Spleen (tissue), 13 donors: ENCODE measurements at regions of chr1 and their contacts with region 1.

Region 1: DNA sequence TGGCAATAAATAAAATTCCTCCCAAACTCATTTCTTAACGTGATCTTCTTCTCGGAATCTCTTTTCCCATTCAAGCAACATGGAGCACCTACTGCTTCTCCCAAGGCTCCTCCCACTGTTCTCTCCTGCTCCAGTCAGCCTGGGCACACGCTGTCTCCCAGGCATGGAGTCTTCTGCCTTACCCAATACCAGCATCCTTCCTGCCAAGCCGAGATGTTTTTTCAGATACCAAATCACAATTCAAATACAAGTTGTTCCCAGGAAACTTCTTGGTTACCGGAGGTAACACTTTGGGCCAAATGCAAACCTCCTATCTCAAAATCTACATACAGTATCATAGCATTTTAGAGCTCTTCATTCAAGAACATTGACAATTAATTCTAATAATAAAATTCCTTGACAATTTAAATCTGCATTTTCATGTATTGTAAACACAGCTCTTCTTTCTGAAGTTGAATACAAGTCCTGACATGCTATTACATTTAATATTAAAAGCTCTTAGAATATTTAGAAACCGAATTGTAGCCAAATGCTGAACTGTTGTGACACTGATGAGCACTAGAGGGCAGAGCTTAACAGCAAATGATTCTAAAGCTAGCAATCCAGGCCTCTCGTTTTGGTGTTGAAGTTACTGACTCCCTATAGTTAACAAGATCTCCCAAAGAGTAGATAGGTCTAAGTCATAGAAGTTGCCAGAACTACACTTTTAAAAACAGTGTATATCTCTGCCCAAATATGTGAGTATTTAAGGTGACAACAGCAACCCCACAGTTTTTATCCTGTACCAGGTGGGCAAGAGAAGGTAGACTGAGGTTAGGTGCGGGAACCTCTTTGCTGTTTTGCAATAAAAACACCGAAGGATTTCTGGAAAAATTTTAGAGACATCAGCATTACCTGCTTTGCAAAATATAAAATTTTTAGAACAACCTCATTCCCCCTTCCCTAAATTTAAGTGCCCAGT is 52.3 kb downstream of the BCAR3 start:
- DNase-seq: no peak
- H3K4me3 ChIP-seq: no peak overlapping the region
- H3K27ac ChIP-seq: no peak overlapping the region
- H3K4me1 ChIP-seq: peaks cover 0 to 22% (median 7%) of the 10 kb centered on the region in 6 donors
- H3K27me3 ChIP-seq: no peaks in the 10 kb centered on the region
- CTCF ChIP-seq: peak; percentile 67 to 89 (median 82)
- POLR2A ChIP-seq: no peak

Region 2: GRCh38 chr1:93437976-93438605 is 191.3 kb before region 1 on chr1:
- intact Hi-C with region 1: loop called (anchors 10 kb)
- DNase-seq: no peak
- H3K4me3 ChIP-seq: no peak overlapping the region
- H3K27ac ChIP-seq: no peak overlapping the region
- H3K4me1 ChIP-seq: peaks cover 0 to 5% (median 0%) of the 10 kb centered on the region in 6 donors
- H3K27me3 ChIP-seq: peaks cover 0 to 24% (median 0%) of the 10 kb centered on the region in 7 donors
- CTCF ChIP-seq: peak in 10 of 11 experiments; percentile 7 to 70 (median 52)
- POLR2A ChIP-seq: no peak

Region 3: GRCh38 chr1:93811326-93812065 is 182.1 kb after region 1 on chr1:
- intact Hi-C with region 1: loop called (anchors 2 kb)
- DNase-seq: no peak
- H3K4me3 ChIP-seq: no peak overlapping the region
- H3K27ac ChIP-seq: peak overlapping the region in 5 of 8 donors; percentile 8 to 45 (median 36)
- H3K4me1 ChIP-seq: peaks cover 0 to 30% (median 16%) of the 10 kb centered on the region in 6 donors
- H3K27me3 ChIP-seq: no peaks in the 10 kb centered on the region
- CTCF ChIP-seq: no peak
- POLR2A ChIP-seq: no peak

Region 4: DNA sequence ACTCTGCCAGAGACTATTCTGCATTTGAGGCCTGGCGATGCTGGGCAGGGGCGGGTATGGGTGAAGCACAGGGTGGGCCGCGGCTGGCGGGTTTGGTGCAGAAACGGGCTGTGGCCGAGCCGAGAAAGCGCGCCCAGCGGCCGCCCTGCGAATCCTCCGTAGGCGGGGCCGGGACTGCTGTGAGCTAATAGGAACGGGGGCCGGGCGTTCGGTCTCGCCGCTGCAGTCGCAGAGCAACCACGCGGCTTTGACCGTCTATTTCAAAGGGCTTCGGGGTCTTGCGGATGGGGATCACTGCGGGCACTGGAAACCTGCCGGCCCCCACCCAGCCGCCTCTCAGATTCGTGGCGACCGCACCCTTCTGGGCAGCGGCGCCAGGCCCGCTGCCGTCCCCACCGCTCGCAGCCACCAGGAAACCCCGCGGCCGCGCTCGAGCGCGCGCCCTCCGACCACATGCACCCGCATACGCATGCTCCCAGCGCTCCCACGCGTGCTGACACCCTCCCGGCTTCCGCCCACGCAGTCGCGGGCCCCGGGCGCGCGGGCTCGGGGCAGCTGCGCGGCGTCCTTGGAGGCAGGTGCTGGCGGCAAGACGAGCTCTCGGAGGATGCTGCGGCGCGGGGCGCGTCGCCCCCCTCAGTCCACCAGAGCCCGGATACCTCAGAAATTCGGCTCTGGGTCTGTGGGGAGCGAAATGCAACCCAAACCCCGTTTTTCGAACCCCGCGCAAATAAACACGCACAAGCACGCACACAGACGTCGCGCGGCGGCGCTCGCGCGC is 217.0 kb after region 1 on chr1:
- intact Hi-C with region 1: loop called (anchors 10 kb)
- DNase-seq: peak; percentile 98
- H3K4me3 ChIP-seq: peak overlapping the region; percentile 37 to 94 (median 80)
- H3K27ac ChIP-seq: peak overlapping the region; percentile 97 to 100 (median 98)
- H3K4me1 ChIP-seq: peaks cover 8 to 42% (median 29%) of the 10 kb centered on the region in 6 donors
- H3K27me3 ChIP-seq: no peaks in the 10 kb centered on the region
- CTCF ChIP-seq: peak; percentile 17 to 75 (median 40)
- POLR2A ChIP-seq: peak in 2 of 3 donors; percentile 11 to 60